Heart left ventricle (tissue), 16 donors: ENCODE measurements at regions of chr15 and their contacts with region 1.

Region 1: DNA sequence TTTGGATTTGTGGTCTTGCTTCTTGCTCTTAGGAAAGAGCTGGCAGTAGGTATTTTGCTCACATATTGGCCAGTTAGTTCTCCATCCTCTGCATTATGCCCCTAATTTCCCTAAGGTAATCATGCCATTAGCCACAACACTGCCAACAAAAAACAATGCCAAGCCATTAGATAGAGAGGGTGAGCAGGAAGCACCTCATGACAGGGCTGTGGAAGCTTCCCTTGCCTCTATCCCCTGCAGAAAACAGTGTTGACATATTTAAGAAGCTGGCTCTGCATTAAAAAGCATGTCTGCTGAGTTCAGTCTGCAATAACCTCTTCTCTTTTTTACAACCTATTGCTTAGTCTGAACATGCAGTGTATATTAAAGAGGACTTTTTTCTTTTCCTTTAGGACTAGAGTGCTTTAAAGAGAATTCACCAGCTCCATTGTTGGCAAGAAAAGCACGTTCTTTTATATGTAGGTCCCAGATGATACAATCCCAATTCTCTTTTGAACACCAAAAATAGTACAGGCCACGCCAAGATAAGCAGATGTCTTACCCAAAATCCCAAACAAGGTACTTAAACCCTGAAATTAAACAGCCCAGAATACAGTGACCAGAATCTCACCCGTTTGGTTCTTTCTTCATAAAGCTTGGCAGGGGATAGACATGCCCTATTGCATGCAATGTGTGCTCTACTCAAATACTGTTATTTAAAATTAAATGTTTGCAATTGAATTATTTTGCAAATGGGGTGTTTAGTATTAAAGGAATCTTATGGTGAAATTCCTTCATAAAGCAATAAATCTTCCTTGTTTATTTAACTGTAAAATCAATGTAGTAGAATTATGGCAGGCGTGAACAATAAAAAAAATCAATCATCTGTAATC is 93.7 kb upstream of the UBE3A start:
- DNase-seq: no peak
- ATAC-seq: peak; percentile 59 to 84 (median 67)
- H3K4me3 ChIP-seq: no peak overlapping the region
- H3K27ac ChIP-seq: no peak overlapping the region
- H3K4me1 ChIP-seq: peaks cover 0 to 12% (median 0%) of the 10 kb centered on the region in 12 donors
- H3K27me3 ChIP-seq: no peaks in the 10 kb centered on the region
- CTCF ChIP-seq: no peak
- POLR2A ChIP-seq: no peak

Region 2: DNA sequence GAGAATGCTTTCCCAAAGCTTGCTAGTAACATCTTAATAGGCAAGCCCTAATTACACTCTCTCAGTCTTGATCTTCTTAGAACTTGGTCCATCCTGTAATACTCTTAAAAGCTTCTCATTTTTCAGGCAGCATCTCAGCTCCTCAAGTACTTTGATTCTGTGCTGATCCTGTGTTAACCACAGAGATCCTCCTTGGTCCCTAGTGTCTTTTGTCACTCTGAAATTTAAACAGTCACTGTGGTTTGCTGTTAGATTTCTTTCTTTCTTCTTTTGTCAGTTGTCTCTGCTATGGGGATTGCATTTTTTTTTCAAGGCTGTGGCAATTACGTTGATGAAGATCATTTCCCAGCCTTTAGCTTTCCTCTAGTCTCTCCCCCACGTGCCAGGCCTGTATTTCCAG is 67.7 kb before region 1 on chr15:
- intact Hi-C with region 1: no loop called
- DNase-seq: no peak
- ATAC-seq: no peak
- H3K4me3 ChIP-seq: no peak overlapping the region
- H3K27ac ChIP-seq: no peak overlapping the region
- H3K4me1 ChIP-seq: peaks cover 0 to 23% (median 2%) of the 10 kb centered on the region in 12 donors
- H3K27me3 ChIP-seq: no peaks in the 10 kb centered on the region
- CTCF ChIP-seq: no peak
- POLR2A ChIP-seq: no peak

Region 3: GRCh38 chr15:25655207-25655948 is 122.9 kb after region 1 on chr15:
- intact Hi-C with region 1: no loop called
- DNase-seq: no peak
- ATAC-seq: no peak
- H3K4me3 ChIP-seq: no peak overlapping the region
- H3K27ac ChIP-seq: no peak overlapping the region
- H3K4me1 ChIP-seq: no peaks in the 10 kb centered on the region
- H3K27me3 ChIP-seq: no peaks in the 10 kb centered on the region
- CTCF ChIP-seq: no peak
- POLR2A ChIP-seq: no peak

Region 4: GRCh38 chr15:25684521-25685431 is 152.3 kb after region 1 on chr15:
- intact Hi-C with region 1: loop called in 1 of 10 experiments (anchors 10 kb)
- DNase-seq: peak in 1 of 5 donors; percentile 58
- ATAC-seq: peak; percentile 16 to 77 (median 58)
- H3K4me3 ChIP-seq: no peak overlapping the region
- H3K27ac ChIP-seq: peak overlapping the region in 4 of 12 donors; percentile 26 to 55 (median 38)
- H3K4me1 ChIP-seq: peaks cover 0 to 35% (median 12%) of the 10 kb centered on the region in 12 donors
- H3K27me3 ChIP-seq: no peaks in the 10 kb centered on the region
- CTCF ChIP-seq: no peak
- POLR2A ChIP-seq: no peak